Activated B cell treated with CpG ODN at 0.5 μM for 24 hours (primary cell): ENCODE measurements at regions of chr14 and their contacts with region 1.

Region 1: GRCh38 chr14:64503478-64504309 is at the start of gene ZBTB25:
- DNase-seq: peak; percentile 91
- ATAC-seq: peak; percentile 66
- H3K4me3 Mint-ChIP-seq: peak within 1 kb of the TSS; percentile 97
- H3K27ac Mint-ChIP-seq: peak within 1 kb of the TSS; percentile 100
- H3K4me1 Mint-ChIP-seq: peaks cover 73% of the 10 kb centered on the region
- H3K27me3 Mint-ChIP-seq: no peaks in the 10 kb centered on the region
- CTCF ChIP-seq: no peak
- total RNA-seq, gene ZBTB25: 20.9 and 29.1 TPM in 2 replicates

Region 2: GRCh38 chr14:63470962-63471793 is 1032.5 kb before region 1 on chr14:
- CTCF ChIA-PET with region 1: no interaction called
- POLR2A ChIA-PET with region 1: no interaction called
- intact Hi-C with region 1: loop called (anchors 10 kb)
- DNase-seq: no peak
- ATAC-seq: peak; percentile 71
- H3K4me3 Mint-ChIP-seq: no peak overlapping the region
- H3K27ac Mint-ChIP-seq: peak overlapping the region; percentile 30
- H3K4me1 Mint-ChIP-seq: peaks cover 40% of the 10 kb centered on the region
- H3K27me3 Mint-ChIP-seq: no peaks in the 10 kb centered on the region
- CTCF ChIP-seq: no peak

Region 3: GRCh38 chr14:63727774-63728728 is 775.6 kb before region 1 on chr14 and contains the start of gene SGPP1:
- CTCF ChIA-PET with region 1: no interaction called
- POLR2A ChIA-PET with region 1: no interaction called
- intact Hi-C with region 1: loop called (anchors 5 kb)
- DNase-seq: peak; percentile 82
- ATAC-seq: peak; percentile 91
- H3K4me3 Mint-ChIP-seq: peak within 1 kb of the TSS; percentile 99
- H3K27ac Mint-ChIP-seq: peak within 1 kb of the TSS; percentile 96
- H3K4me1 Mint-ChIP-seq: peaks cover 42% of the 10 kb centered on the region
- H3K27me3 Mint-ChIP-seq: no peaks in the 10 kb centered on the region
- CTCF ChIP-seq: no peak
- total RNA-seq, gene SGPP1: 20.9 and 21.2 TPM in 2 replicates

Region 4: DNA sequence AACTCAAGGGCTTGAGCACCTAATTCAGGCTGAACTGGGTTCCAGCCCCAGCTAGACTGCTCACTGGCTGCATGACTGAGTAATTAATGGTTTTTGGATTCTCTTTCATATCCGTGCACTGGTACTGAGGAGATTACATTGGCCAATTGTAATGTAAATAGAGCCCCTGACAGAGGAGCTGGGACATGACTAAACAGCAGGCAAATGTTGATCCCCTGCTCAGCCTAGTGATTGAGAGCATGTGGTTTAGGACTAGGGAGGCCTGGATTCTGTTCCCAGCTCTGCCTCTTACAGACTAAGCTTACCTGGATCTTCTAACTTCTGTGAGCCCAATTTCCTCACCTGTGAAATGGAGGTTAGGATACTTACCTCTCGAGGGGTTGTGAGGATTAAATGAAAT is 413.8 kb before region 1 on chr14:
- CTCF ChIA-PET with region 1: no interaction called
- POLR2A ChIA-PET with region 1: no interaction called
- intact Hi-C with region 1: no loop called
- DNase-seq: no peak
- ATAC-seq: no peak
- H3K4me3 Mint-ChIP-seq: no peak overlapping the region
- H3K27ac Mint-ChIP-seq: no peak overlapping the region
- H3K4me1 Mint-ChIP-seq: no peaks in the 10 kb centered on the region
- H3K27me3 Mint-ChIP-seq: no peaks in the 10 kb centered on the region
- CTCF ChIP-seq: no peak

Region 5: GRCh38 chr14:64232095-64232838 is 271.4 kb before region 1 on chr14:
- CTCF ChIA-PET with region 1: no interaction called
- POLR2A ChIA-PET with region 1: interaction called, 27 read pairs
- intact Hi-C with region 1: loop called (anchors 2 kb)
- DNase-seq: no peak
- ATAC-seq: peak; percentile 11
- H3K4me3 Mint-ChIP-seq: peak overlapping the region; percentile 53
- H3K27ac Mint-ChIP-seq: peak overlapping the region; percentile 97
- H3K4me1 Mint-ChIP-seq: peaks cover 61% of the 10 kb centered on the region
- H3K27me3 Mint-ChIP-seq: no peaks in the 10 kb centered on the region
- CTCF ChIP-seq: no peak

Region 6: DNA sequence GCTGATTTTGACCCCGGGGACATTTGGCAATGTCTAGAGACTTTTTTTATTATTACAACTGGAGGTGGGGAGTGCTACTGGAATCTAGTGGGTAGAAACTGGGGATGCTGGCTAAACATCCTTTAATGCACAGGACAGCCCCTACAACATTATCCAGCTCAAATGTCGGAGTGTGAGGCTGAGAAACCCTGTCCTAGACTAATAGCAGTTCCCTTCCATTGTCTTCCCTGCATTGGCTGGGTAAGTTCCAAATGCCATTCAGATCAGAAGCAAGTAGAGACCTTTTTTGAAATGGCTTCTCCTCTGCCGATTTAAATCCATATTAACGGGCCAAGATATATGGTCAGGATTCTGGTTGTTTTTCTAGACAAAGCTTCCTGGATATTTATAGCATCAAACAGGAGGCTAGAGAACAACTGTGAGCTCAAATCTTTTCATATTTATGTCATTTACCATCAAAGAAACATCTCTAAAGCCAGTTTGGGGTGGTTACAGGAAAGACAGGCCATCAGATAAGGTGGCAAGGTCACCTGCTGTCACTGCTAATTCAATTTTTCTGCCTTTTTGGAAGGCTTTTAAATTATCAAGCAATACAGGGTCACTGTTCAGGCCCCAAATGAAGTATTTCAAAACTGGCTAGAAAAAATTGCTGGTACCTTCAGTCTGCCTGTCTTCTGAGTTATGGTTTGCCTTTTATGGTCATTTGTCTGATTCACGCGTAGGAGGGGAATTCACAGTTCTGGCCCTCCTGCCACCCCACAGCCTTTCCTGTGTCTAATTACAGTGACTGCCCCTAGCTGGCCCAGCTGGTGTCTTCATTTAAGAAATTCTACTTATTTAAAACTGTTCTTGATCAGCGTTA is 58.5 kb before region 1 on chr14:
- CTCF ChIA-PET with region 1: no interaction called
- POLR2A ChIA-PET with region 1: interaction called, 36 read pairs
- intact Hi-C with region 1: loop called (anchors 1 kb)
- DNase-seq: no peak
- ATAC-seq: peak; percentile 94
- H3K4me3 Mint-ChIP-seq: peak overlapping the region; percentile 39
- H3K27ac Mint-ChIP-seq: peak overlapping the region; percentile 93
- H3K4me1 Mint-ChIP-seq: peaks cover 53% of the 10 kb centered on the region
- H3K27me3 Mint-ChIP-seq: no peaks in the 10 kb centered on the region
- CTCF ChIP-seq: no peak

Region 7: DNA sequence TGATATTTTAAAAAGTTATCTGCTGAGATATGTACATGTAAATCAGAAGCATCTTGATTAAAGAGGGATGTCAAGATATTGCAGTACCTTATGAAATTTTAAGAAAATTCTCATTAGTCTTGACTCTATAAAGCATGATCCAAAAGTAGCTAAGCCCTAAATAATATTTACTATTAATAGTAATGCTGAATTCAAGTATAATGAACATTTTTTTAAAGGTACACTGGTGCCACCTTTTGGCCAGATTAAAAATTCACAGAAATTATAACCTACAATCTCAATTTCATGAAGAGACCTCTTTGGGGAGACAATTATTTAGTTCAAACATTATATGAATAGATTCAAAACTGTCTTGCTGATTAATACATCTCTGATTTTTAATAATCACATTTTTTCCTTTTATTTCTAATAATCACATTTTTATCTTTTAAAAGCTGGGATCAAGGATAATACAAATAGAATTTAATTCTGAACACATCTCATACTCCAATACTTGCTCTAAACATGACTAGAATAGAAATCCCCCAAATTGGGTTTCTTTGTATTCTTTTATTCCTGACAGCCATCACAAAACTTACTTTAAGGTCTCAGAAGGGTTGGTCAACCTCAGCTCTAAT is 25.0 kb before region 1 on chr14:
- CTCF ChIA-PET with region 1: interaction called, 11 read pairs
- POLR2A ChIA-PET with region 1: interaction called, 4 read pairs
- intact Hi-C with region 1: no loop called
- DNase-seq: no peak
- ATAC-seq: no peak
- H3K4me3 Mint-ChIP-seq: no peak overlapping the region
- H3K27ac Mint-ChIP-seq: no peak overlapping the region
- H3K4me1 Mint-ChIP-seq: peaks cover 4% of the 10 kb centered on the region
- H3K27me3 Mint-ChIP-seq: no peaks in the 10 kb centered on the region
- CTCF ChIP-seq: peak; percentile 23

Region 8: GRCh38 chr14:64550621-64551333 is 47.1 kb after region 1 on chr14:
- CTCF ChIA-PET with region 1: no interaction called
- POLR2A ChIA-PET with region 1: interaction called, 12 read pairs
- intact Hi-C with region 1: no loop called
- DNase-seq: no peak
- ATAC-seq: no peak
- H3K4me3 Mint-ChIP-seq: peak overlapping the region; percentile 66
- H3K27ac Mint-ChIP-seq: no peak overlapping the region
- H3K4me1 Mint-ChIP-seq: peaks cover 13% of the 10 kb centered on the region
- H3K27me3 Mint-ChIP-seq: peaks cover 14% of the 10 kb centered on the region
- CTCF ChIP-seq: no peak

Region 9: DNA sequence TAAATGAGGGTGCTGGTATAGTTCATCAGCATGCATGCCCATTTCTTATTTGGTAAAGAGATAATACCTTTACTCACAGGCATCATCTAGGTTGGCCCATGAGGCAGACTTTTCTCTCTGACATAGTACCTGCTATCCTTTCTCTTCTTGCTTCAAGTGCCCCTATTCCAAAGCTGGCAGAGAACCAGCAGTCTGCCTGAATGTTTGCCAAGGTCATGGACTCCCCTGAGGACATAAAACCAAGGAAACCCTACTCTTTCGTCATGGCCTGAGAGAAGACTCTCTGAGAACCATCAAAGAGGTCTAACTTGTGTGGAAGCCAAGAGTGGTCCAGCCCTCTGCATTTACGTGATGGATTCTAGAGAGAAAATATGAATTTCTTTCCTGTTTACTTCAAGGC is 57.9 kb after region 1 on chr14:
- CTCF ChIA-PET with region 1: no interaction called
- POLR2A ChIA-PET with region 1: no interaction called
- intact Hi-C with region 1: no loop called
- DNase-seq: no peak
- ATAC-seq: no peak
- H3K4me3 Mint-ChIP-seq: no peak overlapping the region
- H3K27ac Mint-ChIP-seq: no peak overlapping the region
- H3K4me1 Mint-ChIP-seq: no peaks in the 10 kb centered on the region
- H3K27me3 Mint-ChIP-seq: peaks cover 3% of the 10 kb centered on the region
- CTCF ChIP-seq: no peak